ENCODE measurements at regions of chrX and their contacts with region 1.

Region 1: DNA sequence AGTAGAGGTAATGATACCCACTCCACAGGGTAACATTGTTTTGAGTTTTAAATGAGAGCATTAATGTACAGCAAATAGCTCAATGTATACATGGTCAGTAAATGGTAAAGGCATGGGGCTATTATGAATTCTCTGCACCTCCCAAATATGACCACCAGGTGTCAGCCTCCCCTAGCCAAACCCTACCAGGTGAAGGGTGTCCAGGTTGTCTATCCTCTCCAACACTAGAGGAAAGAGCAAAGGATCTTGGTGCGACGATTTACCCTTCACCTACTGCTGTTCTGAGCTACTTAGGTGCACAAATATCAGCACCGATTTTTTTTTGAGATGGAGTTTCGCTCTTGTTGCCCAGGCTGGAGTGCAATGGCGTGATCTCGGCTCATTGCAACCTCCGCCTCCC is 26.5 kb upstream of the XIAP start:
- DNase-seq: peak; percentile 64 to 68
- ATAC-seq: peak; percentile 83 to 86
- H3K4me3 ChIP-seq: no peak overlapping the region
- H3K27ac ChIP-seq: peak overlapping the region; percentile 67 to 77
- H3K4me1 ChIP-seq: peaks cover 44% of the 10 kb centered on the region
- CTCF ChIP-seq: peak; percentile 73
- EP300 ChIP-seq: no peak
- POLR2A ChIP-seq: no peak
- RAD21 ChIP-seq: peak; percentile 89 to 95

Region 2: DNA sequence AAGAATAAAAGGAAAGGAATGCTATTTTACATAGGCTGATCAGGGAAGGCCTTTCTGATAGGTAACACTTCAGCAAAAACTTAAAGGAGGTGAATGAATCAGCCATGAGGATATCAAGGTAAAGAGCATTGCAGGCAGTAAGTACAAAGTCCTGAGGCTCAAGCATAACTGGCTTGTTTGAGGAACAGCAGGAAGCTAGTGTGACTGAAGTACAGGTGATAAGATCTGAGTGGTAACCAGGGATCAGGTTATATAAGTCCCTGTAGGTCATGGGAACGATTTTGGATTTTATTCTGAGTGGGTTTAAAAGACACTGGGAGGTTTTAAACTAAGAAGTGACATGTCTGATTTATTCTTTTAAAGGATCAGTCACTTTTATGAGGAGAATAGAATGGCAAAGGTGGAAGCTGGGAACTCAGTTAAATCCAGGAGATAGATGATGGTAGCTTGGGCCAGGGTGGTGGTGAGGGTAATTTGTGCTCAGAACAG is 53.4 kb before region 1 on chrX:
- CTCF ChIA-PET with region 1: interaction called, 80 read pairs
- POLR2A ChIA-PET with region 1: interaction called, 11 read pairs
- DNase-seq: peak in 1 of 2 experiments; percentile 61
- ATAC-seq: peak in 1 of 2 experiments; percentile 15; a peak in 1 of 6 replicates
- H3K4me3 ChIP-seq: no peak overlapping the region
- H3K27ac ChIP-seq: peak overlapping the region; percentile 68 to 83
- H3K4me1 ChIP-seq: peaks cover 37% of the 10 kb centered on the region
- CTCF ChIP-seq: no peak
- EP300 ChIP-seq: no peak
- POLR2A ChIP-seq: no peak
- RAD21 ChIP-seq: no peak

Region 3: DNA sequence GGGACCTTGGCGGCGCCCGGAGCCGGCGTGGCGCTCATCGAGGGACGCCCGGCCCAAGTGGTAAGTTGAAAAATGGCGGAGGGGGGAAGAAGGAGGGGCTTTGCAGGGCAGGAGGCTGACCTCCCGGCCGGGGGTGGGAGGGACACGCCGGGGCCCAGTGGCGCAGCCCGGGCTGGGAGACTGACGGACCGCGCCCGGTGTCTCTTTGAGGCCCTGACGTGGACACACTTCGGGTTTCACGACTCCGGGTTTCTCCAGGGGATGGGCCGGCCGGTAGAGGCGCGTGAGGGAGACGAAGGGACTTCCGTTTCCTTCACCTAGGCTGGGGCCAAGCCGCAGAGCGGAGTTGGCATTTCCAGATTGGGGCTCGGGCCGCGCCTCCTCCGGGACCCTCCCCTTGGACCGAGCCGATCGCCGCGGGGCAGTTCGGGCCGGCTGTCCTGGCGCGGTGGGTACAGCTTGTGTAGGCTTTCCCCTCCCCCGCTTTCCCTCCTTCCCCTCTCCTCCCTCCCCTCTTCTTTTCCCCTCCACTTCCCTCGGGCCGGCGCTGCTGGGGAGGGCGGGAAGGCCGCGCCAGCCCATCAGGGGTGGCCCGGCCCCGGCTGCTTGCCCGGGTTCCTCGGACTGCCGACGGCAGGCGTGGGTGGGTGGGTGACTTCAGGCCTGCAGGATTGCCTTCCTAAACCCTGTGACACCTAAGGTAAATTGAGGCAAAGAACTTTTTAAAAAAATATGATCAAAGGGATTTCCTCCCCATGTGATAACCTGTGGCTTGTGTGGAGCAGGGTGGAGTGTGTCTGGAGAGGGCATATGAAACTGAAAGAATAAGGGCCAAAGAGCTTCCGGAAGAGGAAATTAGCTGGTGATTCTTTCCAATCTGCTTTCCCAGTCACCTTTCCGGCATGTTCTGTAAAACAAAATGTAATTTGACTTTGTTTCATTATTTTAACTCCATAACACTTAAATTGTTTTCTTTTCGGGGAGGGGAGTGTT is 26.8 kb after region 1 on chrX and contains the start of gene XIAP:
- CTCF ChIA-PET with region 1: interaction called, 8 read pairs
- POLR2A ChIA-PET with region 1: interaction called, 18 read pairs
- DNase-seq: peak; percentile 90 to 96
- ATAC-seq: peak; percentile 97
- H3K4me3 ChIP-seq: peak within 1 kb of the TSS; percentile 83
- H3K27ac ChIP-seq: peak within 1 kb of the TSS; percentile 97 to 100
- H3K4me1 ChIP-seq: peaks cover 10% of the 10 kb centered on the region; the same call in 2 of the 3 replicates
- CTCF ChIP-seq: no peak
- EP300 ChIP-seq: no peak
- POLR2A ChIP-seq: peak; percentile 31
- RAD21 ChIP-seq: 0 out of 5 replicates have a peak, but pooled peaks of 1 of the 2 experiments have one; percentile 21
- polyA plus RNA-seq, gene XIAP: 33.3 and 42.9 TPM in 2 replicates

Region 4: DNA sequence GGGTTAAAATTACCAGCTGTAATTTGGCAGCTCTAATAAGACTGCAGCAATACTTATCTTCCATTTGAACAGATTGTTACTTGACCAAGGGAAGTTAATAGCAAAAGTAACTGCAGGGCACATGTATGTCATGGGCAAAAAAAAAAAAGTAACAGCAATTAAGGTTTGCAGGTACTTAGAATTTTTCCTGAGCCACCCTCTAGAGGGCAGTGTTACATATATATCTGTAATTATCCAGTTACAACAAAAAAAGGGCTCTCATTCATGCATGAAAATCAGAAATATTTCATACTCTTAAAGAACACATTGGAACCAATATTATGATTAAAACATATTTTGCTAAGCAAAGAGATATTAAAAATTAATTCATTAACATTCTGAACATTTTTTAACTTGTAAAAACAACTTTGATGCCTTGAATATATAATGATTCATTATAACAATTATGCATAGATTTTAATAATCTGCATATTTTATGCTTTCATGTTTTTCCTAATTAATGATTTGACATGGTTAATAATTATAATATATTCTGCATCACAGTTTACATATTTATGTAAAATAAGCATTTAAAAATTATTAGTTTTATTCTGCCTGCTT is 51.5 kb after region 1 on chrX:
- CTCF ChIA-PET with region 1: interaction called, 13 read pairs
- POLR2A ChIA-PET with region 1: no interaction called
- DNase-seq: peak; percentile 36 to 66
- ATAC-seq: peak; percentile 24 to 60; a peak in 3 of 6 replicates
- H3K4me3 ChIP-seq: no peak overlapping the region
- H3K27ac ChIP-seq: no peak overlapping the region
- H3K4me1 ChIP-seq: peaks cover 13% of the 10 kb centered on the region
- CTCF ChIP-seq: peak; percentile 64
- EP300 ChIP-seq: no peak
- POLR2A ChIP-seq: no peak
- RAD21 ChIP-seq: peak; percentile 50 to 57; a peak in 4 of 5 replicates

Region 5: GRCh38 chrX:123976706-123977316 is 143.4 kb after region 1 on chrX:
- CTCF ChIA-PET with region 1: interaction called, 59 read pairs
- POLR2A ChIA-PET with region 1: no interaction called
- DNase-seq: peak; percentile 41 to 64
- ATAC-seq: peak; percentile 83 to 88
- H3K4me3 ChIP-seq: no peak overlapping the region
- H3K27ac ChIP-seq: no peak overlapping the region
- H3K4me1 ChIP-seq: peaks cover 56% of the 10 kb centered on the region
- CTCF ChIP-seq: peak; percentile 59
- EP300 ChIP-seq: no peak
- POLR2A ChIP-seq: no peak
- RAD21 ChIP-seq: peak; percentile 75 to 82

Measured in A549 (cell line).